PC-9 (cell line): ENCODE measurements at regions of chr1 and their contacts with region 1.

Region 1: DNA sequence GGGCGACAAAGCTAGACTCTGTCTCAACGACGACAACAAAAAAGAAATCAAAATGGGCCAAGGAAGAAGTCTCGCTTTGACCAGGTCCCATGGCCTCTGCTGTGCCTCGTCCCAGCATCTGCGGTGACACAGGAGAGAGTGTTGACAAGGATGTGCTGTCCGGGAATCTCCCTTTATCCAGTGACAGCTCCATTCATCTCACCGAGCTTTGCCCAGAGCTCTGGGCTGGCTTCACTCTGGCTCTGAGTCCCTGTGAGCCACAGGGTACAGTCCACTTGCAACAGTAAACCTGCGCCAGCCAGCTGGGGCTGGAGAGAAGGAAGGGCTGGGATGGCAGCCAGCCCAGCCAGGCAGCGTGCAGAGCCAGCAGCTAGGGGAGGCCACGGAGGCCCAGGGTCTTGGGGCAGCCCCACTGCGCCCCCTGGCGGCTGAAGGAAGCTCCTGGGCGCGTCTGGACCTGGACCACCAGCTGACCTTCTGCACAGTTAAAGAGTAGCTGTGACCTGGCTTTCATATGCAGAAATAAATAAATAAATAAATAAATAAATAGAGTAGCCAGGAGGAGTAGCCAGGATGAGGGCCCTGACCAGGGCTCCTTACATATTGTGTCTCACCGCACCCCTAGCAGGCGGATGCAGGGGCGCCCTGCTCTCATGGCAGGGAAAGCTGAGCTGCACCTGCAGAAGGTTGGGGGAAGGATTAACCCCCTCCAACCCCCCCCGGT is 29.7 kb downstream of the ENO1 start:
- DNase-seq: peak; percentile 57 to 86
- H3K4me3 ChIP-seq: no peak overlapping the region
- H3K27ac ChIP-seq: no peak overlapping the region
- H3K4me1 ChIP-seq: no peaks in the 10 kb centered on the region
- H3K27me3 ChIP-seq: no peaks in the 10 kb centered on the region
- CTCF ChIP-seq: peak; percentile 76

Region 2: GRCh38 chr1:7975212-7975865 is 873.5 kb before region 1 on chr1:
- CTCF ChIA-PET with region 1: no interaction called
- POLR2A ChIA-PET with region 1: no interaction called
- intact Hi-C with region 1: loop called (anchors 2 kb)
- DNase-seq: peak; percentile 56 to 84
- H3K4me3 ChIP-seq: no peak overlapping the region
- H3K27ac ChIP-seq: no peak overlapping the region
- H3K4me1 ChIP-seq: no peaks in the 10 kb centered on the region; the same call in 1 of the 2 replicates
- H3K27me3 ChIP-seq: no peaks in the 10 kb centered on the region
- CTCF ChIP-seq: peak; percentile 84

Region 3: DNA sequence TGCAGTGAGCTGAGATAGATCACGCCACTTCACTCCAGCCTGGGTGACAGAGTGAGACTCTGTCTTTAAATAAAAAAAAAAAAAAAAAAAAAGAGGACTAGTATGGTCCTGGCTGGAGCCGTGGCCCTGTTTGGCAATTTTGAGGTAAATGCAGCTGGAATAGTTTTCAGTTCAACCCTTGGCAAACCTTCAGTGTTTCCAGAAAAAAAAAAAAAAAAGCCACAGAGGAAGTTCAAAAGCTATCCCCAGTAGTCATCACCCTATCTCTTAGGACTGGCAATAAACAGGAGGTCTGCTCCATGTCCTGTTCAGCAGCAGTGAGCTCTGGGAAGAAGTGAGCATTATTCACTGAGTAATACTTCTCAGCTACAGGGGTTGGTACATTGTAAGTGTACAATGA is 765.9 kb before region 1 on chr1:
- CTCF ChIA-PET with region 1: no interaction called
- POLR2A ChIA-PET with region 1: interaction called, 18 read pairs
- intact Hi-C with region 1: no loop called
- DNase-seq: no peak
- H3K4me3 ChIP-seq: no peak overlapping the region
- H3K27ac ChIP-seq: no peak overlapping the region
- H3K4me1 ChIP-seq: peaks cover 19% of the 10 kb centered on the region
- H3K27me3 ChIP-seq: no peaks in the 10 kb centered on the region
- CTCF ChIP-seq: no peak

Region 4: DNA sequence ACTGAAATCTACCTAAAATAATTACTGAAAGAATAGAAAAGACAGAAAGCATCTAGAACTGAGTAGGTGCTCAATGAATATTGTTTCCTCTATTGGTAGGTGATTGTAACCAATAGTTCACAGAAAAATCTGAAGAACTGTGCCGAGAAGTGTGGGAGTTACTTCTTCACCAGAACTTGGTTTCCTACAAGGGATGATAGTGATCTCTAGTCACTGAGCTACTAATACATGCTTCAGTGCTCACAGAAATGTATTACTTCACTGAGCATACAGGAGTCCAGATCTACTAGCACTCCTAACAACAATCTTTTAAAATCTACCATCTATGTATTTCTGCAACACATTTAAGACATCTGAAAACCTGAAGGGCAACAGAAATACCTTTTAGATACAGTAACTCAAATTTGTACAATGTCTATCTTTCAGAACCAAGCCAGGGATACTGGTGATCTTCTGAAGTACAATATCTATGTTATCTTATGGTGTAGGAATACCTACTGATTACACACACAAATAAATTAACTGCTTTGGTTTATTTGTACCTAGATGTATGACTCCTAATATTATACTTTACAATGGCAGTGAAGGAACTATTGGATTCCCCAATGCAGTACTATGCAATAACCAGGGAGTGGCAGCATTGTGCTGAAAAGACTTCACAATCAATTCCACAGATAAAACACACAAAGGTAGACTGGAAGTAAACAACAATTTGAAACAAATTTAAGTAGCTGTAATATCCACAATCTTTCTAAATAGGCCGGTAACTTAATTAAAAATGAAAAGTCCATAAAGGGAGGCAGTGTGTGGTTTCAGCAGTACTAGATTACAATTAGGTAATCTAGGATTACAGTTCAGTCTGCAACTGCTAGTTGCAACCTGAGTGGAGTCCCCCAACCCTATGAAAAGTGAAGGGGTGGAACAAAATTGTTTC is 287.9 kb before region 1 on chr1:
- CTCF ChIA-PET with region 1: interaction called, 13 read pairs
- POLR2A ChIA-PET with region 1: no interaction called
- intact Hi-C with region 1: loop called (anchors 1 kb)
- DNase-seq: peak; percentile 5 to 43
- H3K4me3 ChIP-seq: no peak overlapping the region
- H3K27ac ChIP-seq: no peak overlapping the region
- H3K4me1 ChIP-seq: peaks cover 13% of the 10 kb centered on the region
- H3K27me3 ChIP-seq: no peaks in the 10 kb centered on the region
- CTCF ChIP-seq: peak; percentile 86